Heart left ventricle (tissue), 16 donors: ENCODE measurements at regions of chr6 and their contacts with region 1.

Region 1: GRCh38 chr6:15473741-15474161 is 189.1 kb downstream of the DTNBP1 start:
- DNase-seq: peak in 2 of 5 donors; percentile 45 to 50
- ATAC-seq: peak; percentile 78 to 91 (median 86)
- H3K4me3 ChIP-seq: no peak overlapping the region
- H3K27ac ChIP-seq: peak overlapping the region; percentile 43 to 86 (median 64)
- H3K4me1 ChIP-seq: peaks cover 7 to 82% (median 45%) of the 10 kb centered on the region in 12 donors
- H3K27me3 ChIP-seq: no peaks in the 10 kb centered on the region
- CTCF ChIP-seq: no peak
- POLR2A ChIP-seq: no peak

Region 2: DNA sequence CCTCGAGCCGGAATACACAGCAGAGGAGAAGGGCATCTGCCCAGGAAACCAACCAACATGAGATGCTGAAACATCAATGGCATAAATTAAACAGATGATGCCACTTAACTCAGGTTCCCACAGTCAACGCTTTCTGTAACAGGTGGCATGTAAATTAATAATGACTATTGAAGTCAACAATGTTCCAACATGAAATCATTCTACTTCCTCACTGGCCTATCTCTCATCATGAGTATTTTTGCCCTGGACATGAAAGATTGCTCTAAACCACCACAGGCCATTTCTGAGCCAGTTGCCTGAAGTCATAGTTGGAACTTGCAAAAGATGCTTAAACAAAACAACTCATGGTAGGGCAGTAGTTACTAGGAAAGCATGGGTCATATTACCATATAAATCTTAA is 625.7 kb before region 1 on chr6:
- intact Hi-C with region 1: no loop called
- DNase-seq: no peak
- ATAC-seq: no peak
- H3K4me3 ChIP-seq: no peak overlapping the region
- H3K27ac ChIP-seq: peak overlapping the region in 3 of 12 donors; percentile 13 to 19 (median 17)
- H3K4me1 ChIP-seq: peaks cover 0 to 4% (median 0%) of the 10 kb centered on the region in 12 donors
- H3K27me3 ChIP-seq: no peaks in the 10 kb centered on the region
- CTCF ChIP-seq: no peak
- POLR2A ChIP-seq: no peak

Region 3: GRCh38 chr6:14876778-14877613 is 596.8 kb before region 1 on chr6:
- intact Hi-C with region 1: loop called in 1 of 10 experiments (anchors 10 kb)
- DNase-seq: peak in 1 of 5 donors; percentile 37
- ATAC-seq: peak; percentile 86 to 94 (median 90)
- H3K4me3 ChIP-seq: no peak overlapping the region
- H3K27ac ChIP-seq: peak overlapping the region; percentile 63 to 91 (median 75)
- H3K4me1 ChIP-seq: peaks cover 4 to 63% (median 34%) of the 10 kb centered on the region in 12 donors
- H3K27me3 ChIP-seq: no peaks in the 10 kb centered on the region
- CTCF ChIP-seq: no peak
- POLR2A ChIP-seq: no peak

Region 4: DNA sequence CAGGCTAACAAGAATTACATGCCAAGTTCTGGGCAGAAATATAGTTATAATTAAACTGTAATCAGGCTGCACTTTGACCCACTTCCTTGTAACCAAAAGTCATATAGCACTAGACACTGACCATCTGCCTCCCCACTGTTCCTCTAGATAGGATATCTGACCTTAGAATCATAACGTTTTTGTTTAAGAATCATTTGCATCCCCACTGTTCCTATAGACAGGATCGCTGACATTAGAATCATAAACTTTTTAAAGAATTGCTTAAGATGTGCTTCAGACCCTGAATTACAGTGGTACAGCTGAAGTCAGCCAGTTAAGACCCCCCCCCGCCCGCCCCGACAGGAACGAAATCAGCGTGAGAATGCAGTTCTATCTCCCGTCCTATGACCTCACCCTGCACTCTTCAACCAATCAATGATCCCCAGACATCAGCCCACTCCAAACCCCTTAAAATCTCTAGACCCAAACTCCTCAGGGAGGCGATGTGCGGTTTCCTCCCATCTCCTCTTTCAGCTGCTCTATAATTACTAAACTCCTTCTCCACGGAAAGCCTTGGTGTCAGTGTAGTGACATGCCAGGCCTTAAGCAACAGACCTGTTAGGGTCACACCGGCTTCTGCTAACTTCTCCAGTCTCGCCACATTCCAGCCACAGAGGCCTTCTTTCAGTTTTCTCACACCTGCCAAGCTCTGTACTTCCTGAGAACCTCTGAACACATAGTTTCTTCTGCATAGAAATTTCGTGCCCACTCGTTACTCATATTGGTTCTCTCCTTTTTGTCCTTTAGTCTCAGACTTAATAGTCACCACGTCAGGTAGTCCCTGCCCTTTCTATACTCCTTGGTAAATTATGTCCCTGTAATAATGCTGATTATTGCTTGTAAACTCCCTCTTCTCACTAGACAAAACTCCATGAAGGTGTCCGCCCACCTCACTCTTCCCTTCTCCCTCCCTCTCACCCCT is 95.6 kb after region 1 on chr6:
- intact Hi-C with region 1: no loop called
- DNase-seq: no peak
- ATAC-seq: peak in 3 of 4 donors; percentile 48 to 83 (median 68)
- H3K4me3 ChIP-seq: no peak overlapping the region
- H3K27ac ChIP-seq: peak overlapping the region in 1 of 12 donors; percentile 24
- H3K4me1 ChIP-seq: peaks cover 0 to 15% (median 7%) of the 10 kb centered on the region in 12 donors
- H3K27me3 ChIP-seq: no peaks in the 10 kb centered on the region
- CTCF ChIP-seq: no peak
- POLR2A ChIP-seq: no peak